Mammary epithelial cell (primary cell): ENCODE measurements at regions of chr9 and their contacts with region 1.

Region 1: GRCh38 chr9:115604831-115605483 is 487.0 kb upstream of the TNC start:
- DNase-seq: peak; percentile 91
- H3K4me3 ChIP-seq: no peak overlapping the region
- H3K27ac ChIP-seq: no peak overlapping the region
- H3K4me1 ChIP-seq: peaks cover 23% of the 10 kb centered on the region
- H3K27me3 ChIP-seq: no peaks in the 10 kb centered on the region
- CTCF ChIP-seq: no peak

Region 2: GRCh38 chr9:115289757-115290208 is 315.2 kb before region 1 on chr9:
- CTCF ChIA-PET with region 1: no interaction called
- dilution Hi-C with region 1: no loop called
- in situ Hi-C with region 1: no loop called
- intact Hi-C with region 1: no loop called
- DNase-seq: no peak
- H3K4me3 ChIP-seq: no peak overlapping the region
- H3K27ac ChIP-seq: no peak overlapping the region
- H3K4me1 ChIP-seq: peaks cover 18% of the 10 kb centered on the region
- H3K27me3 ChIP-seq: no peaks in the 10 kb centered on the region
- CTCF ChIP-seq: no peak

Region 3: GRCh38 chr9:115349526-115349925 is 255.4 kb before region 1 on chr9:
- CTCF ChIA-PET with region 1: no interaction called
- dilution Hi-C with region 1: no loop called
- in situ Hi-C with region 1: no loop called
- intact Hi-C with region 1: no loop called
- DNase-seq: no peak
- H3K4me3 ChIP-seq: no peak overlapping the region
- H3K27ac ChIP-seq: no peak overlapping the region
- H3K4me1 ChIP-seq: peaks cover 23% of the 10 kb centered on the region
- H3K27me3 ChIP-seq: no peaks in the 10 kb centered on the region
- CTCF ChIP-seq: no peak

Region 4: GRCh38 chr9:115520646-115521045 is 84.3 kb before region 1 on chr9:
- CTCF ChIA-PET with region 1: no interaction called
- dilution Hi-C with region 1: no loop called
- in situ Hi-C with region 1: no loop called
- intact Hi-C with region 1: no loop called
- DNase-seq: no peak
- H3K4me3 ChIP-seq: no peak overlapping the region
- H3K27ac ChIP-seq: no peak overlapping the region
- H3K4me1 ChIP-seq: no peaks in the 10 kb centered on the region
- H3K27me3 ChIP-seq: no peaks in the 10 kb centered on the region
- CTCF ChIP-seq: no peak

Region 5: GRCh38 chr9:115531410-115532125 is 73.4 kb before region 1 on chr9:
- CTCF ChIA-PET with region 1: no interaction called
- dilution Hi-C with region 1: no loop called
- in situ Hi-C with region 1: no loop called
- intact Hi-C with region 1: no loop called
- DNase-seq: peak; percentile 47
- H3K4me3 ChIP-seq: no peak overlapping the region
- H3K27ac ChIP-seq: no peak overlapping the region
- H3K4me1 ChIP-seq: no peaks in the 10 kb centered on the region
- H3K27me3 ChIP-seq: no peaks in the 10 kb centered on the region
- CTCF ChIP-seq: no peak

Region 6: DNA sequence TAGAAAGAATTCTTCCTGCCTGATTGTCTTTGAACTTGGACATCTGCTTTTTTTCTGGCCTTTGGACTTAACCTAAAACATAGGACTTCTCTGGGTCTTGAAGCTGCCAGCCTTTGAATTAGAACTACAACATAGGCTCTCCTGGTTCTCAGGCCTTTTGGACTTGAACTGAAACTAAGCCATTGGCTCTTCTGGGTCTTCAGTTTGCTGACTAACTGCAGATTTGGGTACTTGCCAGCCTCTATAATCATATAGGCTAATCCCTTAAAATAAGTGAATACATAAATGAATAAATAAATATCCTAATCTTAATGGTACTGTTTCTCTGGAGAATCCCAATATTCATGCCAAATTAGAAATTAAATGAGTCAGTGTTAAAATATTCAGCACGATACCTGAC is 75.3 kb after region 1 on chr9:
- CTCF ChIA-PET with region 1: no interaction called
- dilution Hi-C with region 1: no loop called
- in situ Hi-C with region 1: loop called (anchors 10 kb)
- intact Hi-C with region 1: no loop called
- DNase-seq: no peak
- H3K4me3 ChIP-seq: no peak overlapping the region
- H3K27ac ChIP-seq: no peak overlapping the region
- H3K4me1 ChIP-seq: no peaks in the 10 kb centered on the region
- H3K27me3 ChIP-seq: no peaks in the 10 kb centered on the region
- CTCF ChIP-seq: no peak